ENCODE measurements at regions of chr2 and their contacts with region 1.

Region 1: GRCh38 chr2:73085691-73086360 is 14.3 kb upstream of the SFXN5 start:
- DNase-seq: peak; percentile 91
- H3K4me3 ChIP-seq: no peak overlapping the region
- H3K27ac ChIP-seq: no peak overlapping the region
- H3K4me1 ChIP-seq: peaks cover 13 to 41% (median 28%) of the 10 kb centered on the region in 4 donors
- H3K27me3 ChIP-seq: no peaks in the 10 kb centered on the region
- CTCF ChIP-seq: peak in 5 of 7 experiments; percentile 62 to 94 (median 89)
- EP300 ChIP-seq: no peak
- POLR2A ChIP-seq: no peak

Region 2: DNA sequence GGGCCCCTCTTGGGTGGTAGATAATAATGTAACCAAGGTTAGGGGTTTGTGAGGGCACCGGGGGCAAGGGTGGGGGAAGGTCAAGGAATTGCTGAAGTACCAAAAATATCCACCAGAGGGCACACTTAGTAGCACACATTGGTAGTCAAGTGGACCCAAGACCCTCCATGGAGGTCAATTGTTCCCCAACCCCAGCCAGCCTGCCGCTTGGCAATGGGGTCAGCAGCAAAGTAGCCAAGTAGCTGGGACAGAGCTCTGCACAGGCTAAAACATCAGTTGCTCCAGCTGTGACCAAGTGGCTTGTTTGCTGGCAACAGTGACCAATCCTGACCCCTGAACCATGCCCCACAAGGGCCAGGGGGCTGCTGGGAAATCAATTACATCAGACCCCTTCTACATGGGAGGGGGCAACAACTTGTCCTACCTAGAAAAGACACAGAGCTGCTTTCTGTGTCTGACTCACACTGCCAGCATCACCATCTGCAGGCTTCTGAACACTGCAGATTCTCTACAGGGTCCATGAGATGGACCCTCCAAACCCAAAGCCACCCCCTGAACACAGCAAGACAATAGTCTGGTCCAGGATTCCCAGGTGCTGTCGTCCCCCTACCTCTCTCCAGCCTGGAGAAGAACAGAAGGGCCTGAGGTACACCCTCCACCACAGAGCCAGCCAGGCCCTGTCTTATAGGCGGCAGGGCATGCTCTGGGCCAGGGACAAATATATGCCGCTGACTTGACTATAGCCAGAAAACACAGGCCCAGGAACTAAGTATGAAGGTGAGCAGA is 92.5 kb before region 1 on chr2:
- intact Hi-C with region 1: loop called (anchors 10 kb)
- DNase-seq: peak; percentile 26 to 65
- H3K4me3 ChIP-seq: no peak overlapping the region
- H3K27ac ChIP-seq: no peak overlapping the region
- H3K4me1 ChIP-seq: no peaks in the 10 kb centered on the region
- H3K27me3 ChIP-seq: no peaks in the 10 kb centered on the region
- CTCF ChIP-seq: peak in 5 of 7 experiments; percentile 45 to 92 (median 76)
- EP300 ChIP-seq: no peak
- POLR2A ChIP-seq: no peak

Region 3: GRCh38 chr2:73156539-73157124 is 70.8 kb after region 1 on chr2:
- intact Hi-C with region 1: loop called (anchors 2 kb)
- DNase-seq: peak; percentile 70 to 82
- H3K4me3 ChIP-seq: no peak overlapping the region
- H3K27ac ChIP-seq: no peak overlapping the region
- H3K4me1 ChIP-seq: peaks cover 0 to 10% (median 7%) of the 10 kb centered on the region in 4 donors
- H3K27me3 ChIP-seq: peaks cover 0 to 28% (median 12%) of the 10 kb centered on the region in 3 donors
- CTCF ChIP-seq: peak in 5 of 7 experiments; percentile 30 to 69 (median 51)
- EP300 ChIP-seq: no peak
- POLR2A ChIP-seq: no peak

Region 4: GRCh38 chr2:73176881-73177644 is 91.2 kb after region 1 on chr2:
- intact Hi-C with region 1: loop called (anchors 5 kb)
- DNase-seq: peak; percentile 93 to 97
- H3K4me3 ChIP-seq: peak overlapping the region; percentile 55 to 61 (median 56)
- H3K27ac ChIP-seq: peak overlapping the region; percentile 26 to 81 (median 78)
- H3K4me1 ChIP-seq: peaks cover 20 to 32% (median 30%) of the 10 kb centered on the region in 4 donors
- H3K27me3 ChIP-seq: peaks cover 0 to 78% (median 16%) of the 10 kb centered on the region in 3 donors
- CTCF ChIP-seq: peak in 5 of 7 experiments; percentile 93 to 99 (median 98)
- EP300 ChIP-seq: no peak
- POLR2A ChIP-seq: no peak

Measured in stomach (tissue), 19 donors.